Activated CD4-positive, alpha-beta T cell treated with anti-CD3 and anti-CD28 coated beads, Interleukin-2, amount 10 ng/mL, durations not matched to agents 24 days and 14 days (primary cell): ENCODE measurements at regions of chr9 and their contacts with region 1.

Region 1: DNA sequence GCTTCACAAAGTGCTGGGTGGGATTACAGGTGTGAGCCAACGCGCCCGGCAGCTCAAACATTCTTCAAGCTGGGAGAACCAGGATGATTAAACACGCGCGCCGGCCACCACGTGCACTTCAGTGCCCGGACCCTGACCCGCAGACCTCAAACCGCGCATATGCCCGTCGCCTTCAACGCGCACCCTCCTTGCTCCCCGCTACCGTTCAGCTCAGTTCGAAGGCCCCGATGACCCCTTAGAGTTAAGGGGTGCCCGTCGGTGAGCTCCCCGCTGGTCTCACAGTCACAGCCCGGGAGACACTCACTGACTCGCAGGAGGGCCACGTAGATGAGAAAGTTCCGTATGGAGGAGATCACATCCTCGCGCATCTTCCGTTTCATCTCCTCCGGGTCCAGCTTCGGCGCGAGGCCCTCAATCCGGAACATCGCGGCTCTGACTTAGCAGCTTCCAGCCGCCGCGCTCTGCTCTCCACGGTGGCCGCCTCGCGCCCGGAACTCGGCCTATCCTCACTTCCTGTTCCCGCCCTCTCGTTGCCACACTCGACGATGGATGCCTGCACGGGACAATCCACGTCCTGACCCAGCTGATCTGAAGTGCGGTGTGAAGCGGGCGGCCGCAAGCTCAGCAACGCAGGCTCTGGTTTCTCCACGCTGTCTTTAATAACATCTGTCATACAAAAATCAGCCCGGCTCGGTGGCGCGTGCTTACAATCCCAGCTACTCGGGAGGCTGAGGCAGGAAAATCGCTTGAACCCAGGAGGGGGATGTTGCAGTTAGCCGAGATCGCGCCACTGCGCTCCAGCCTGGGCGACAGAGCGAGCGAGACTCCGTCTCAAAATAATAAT is at the start of gene TOMM5:
- DNase-seq: peak; percentile 98
- H3K4me3 Mint-ChIP-seq: peak within 1 kb of the TSS; percentile 97
- H3K27ac Mint-ChIP-seq: peak within 1 kb of the TSS; percentile 99
- H3K4me1 Mint-ChIP-seq: peaks cover 21% of the 10 kb centered on the region
- H3K27me3 Mint-ChIP-seq: peaks cover 16% of the 10 kb centered on the region
- total RNA-seq, gene TOMM5: 186 and 193 TPM in 2 replicates

Region 2: DNA sequence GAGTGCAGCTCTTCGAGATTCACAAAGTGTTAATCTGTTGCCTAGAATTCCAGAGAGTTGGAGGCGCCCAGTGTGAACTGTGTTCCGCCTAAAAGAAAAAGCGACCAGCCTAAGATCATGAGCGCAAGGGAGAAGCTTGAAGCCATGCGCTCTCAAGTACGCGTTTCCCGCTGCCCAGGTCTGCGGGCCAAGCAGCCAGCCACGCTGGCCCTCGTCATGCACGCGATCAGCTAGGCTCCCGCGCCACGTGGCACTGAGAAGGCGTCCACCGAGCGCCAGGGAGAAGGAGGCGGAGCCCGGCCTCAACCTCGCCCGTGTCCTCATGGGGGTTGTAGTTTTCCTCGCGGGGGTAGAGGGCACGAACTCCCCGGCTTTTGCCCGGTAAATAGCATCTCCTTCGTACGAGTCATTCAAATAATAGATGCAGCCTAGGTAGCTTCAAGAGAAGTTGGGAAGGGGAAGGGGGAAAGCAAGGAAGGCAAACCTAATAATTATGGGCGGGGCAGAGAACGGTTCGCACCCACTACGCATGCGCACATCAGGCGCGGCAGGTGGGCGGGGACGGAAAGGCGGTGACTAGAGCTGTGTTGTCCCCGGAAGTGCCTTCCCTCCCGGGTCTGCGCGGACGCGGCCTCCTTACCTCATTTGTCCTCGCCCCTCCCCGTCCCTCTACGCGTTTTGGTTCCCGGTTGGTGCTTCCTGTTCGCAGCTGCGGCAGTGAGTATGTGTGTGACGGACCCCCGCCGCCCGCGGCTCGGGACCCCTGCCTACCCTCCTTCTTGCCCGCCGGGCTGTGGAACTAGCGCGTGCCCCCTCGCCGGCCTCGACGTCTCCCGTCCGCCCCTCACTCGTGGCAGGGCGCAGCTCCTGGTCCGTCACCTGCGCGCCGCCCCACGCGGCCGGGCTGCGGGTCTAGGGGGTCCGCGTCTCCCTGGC is 472.2 kb before region 1 on chr9 and contains the start of gene ZCCHC7:
- intact Hi-C with region 1: loop called (anchors 5 kb)
- DNase-seq: peak; percentile 97
- H3K4me3 Mint-ChIP-seq: peak within 1 kb of the TSS; percentile 92
- H3K27ac Mint-ChIP-seq: peak within 1 kb of the TSS; percentile 98
- H3K4me1 Mint-ChIP-seq: peaks cover 17% of the 10 kb centered on the region
- H3K27me3 Mint-ChIP-seq: no peaks in the 10 kb centered on the region
- total RNA-seq, gene ZCCHC7: 24.2 and 25.3 TPM in 2 replicates

Region 3: DNA sequence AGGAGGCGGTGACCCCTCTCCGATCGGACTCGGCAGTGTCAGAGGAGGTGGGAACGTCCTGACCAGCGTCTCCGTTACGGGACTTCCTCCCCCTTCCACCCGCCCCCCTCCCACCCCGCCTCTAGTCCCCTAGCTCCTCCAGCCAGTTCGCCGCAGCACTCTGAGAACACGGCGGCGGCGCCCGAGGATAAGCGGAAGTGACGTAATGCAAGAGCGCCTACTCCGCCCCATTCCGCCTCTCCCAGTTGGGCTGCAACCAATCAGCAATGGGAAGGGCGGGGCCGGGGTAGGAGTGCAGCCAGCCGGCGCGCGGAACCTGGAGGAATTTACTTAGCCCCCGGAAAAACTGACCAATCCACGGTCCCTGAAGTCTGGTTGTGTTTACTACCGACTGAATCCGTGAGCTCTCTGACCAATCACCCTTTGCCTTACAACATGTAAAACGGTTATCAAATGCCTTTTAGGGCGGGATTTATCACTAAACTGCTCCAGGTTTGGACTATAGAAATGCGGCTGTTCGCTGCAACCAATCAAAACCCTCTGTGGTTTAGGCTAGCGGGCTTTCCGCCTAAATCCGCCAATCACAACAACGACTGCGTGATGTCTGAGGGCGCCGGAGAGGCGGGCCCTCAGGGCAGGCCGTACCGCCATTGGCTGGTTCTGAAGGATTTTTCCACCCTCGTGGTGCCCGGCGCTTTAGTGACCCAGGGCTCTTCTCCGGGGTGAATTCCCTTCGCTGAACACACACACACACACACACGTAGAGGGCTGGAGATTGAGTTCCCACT is 126.9 kb before region 1 on chr9 and contains the start of gene ZBTB5:
- intact Hi-C with region 1: loop called (anchors 1 kb)
- DNase-seq: peak; percentile 99
- H3K4me3 Mint-ChIP-seq: peak within 1 kb of the TSS; percentile 99
- H3K27ac Mint-ChIP-seq: peak within 1 kb of the TSS; percentile 98
- H3K4me1 Mint-ChIP-seq: peaks cover 35% of the 10 kb centered on the region
- H3K27me3 Mint-ChIP-seq: no peaks in the 10 kb centered on the region
- total RNA-seq, gene ZBTB5: 9.2 and 9.5 TPM in 2 replicates

Region 4: DNA sequence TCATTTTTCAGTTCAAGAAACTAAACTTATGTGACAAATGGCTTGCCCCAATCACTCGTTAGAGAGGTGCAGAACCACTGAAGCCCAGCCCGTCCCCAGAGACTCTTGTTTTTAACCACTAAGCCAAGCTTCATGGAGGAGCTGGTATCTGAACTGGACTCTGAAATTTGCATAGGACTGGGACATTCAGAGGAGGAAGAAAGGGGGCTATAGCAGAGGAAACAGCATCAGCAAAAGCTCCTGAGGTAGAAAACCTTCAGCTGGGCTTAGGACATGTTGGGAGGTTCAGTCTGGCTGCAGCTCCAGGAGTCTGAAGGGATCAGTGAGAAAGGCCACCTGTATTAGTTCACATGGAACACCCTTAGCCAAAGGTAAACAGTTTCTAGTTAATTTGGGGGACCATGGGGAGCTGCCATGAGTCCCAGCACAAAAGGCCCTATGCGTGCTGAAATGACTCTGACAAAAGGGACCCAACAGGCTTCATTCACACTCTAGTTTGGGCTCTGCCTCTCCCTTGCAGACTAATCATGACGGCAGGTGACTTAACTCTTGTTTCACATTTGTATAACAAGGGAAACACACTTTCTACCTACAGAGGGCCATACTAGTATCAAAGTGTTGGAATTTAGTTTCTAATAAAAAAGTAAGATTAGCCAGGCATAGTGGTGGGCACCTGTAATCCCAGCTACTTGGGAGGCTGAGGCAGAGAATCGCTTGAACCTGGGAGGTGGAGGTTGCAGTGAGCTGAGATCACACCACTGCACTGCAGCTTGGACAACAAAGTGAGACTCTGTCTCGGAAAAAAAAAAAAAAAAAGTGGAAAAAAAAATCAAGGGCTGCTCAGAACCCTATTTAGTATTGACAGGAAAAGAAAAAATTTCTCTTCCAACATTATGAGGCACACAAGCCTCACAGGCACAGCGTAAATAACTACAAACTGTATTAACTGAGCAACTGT is 26.4 kb before region 1 on chr9:
- intact Hi-C with region 1: no loop called
- DNase-seq: no peak
- H3K4me3 Mint-ChIP-seq: no peak overlapping the region
- H3K27ac Mint-ChIP-seq: no peak overlapping the region
- H3K4me1 Mint-ChIP-seq: peaks cover 2% of the 10 kb centered on the region
- H3K27me3 Mint-ChIP-seq: no peaks in the 10 kb centered on the region

Region 5: GRCh38 chr9:37575921-37576721 is 16.2 kb before region 1 on chr9 and contains the start of gene FBXO10:
- intact Hi-C with region 1: loop called (anchors 2 kb)
- DNase-seq: peak; percentile 88
- H3K4me3 Mint-ChIP-seq: peak within 1 kb of the TSS; percentile 90
- H3K27ac Mint-ChIP-seq: peak within 1 kb of the TSS; percentile 31
- H3K4me1 Mint-ChIP-seq: peaks cover 22% of the 10 kb centered on the region
- H3K27me3 Mint-ChIP-seq: peaks cover 10% of the 10 kb centered on the region
- total RNA-seq, gene FBXO10: 1.9 and 2.7 TPM in 2 replicates

Region 6: GRCh38 chr9:37632479-37632878 is 40.1 kb after region 1 on chr9:
- intact Hi-C with region 1: no loop called
- DNase-seq: no peak
- H3K4me3 Mint-ChIP-seq: no peak overlapping the region
- H3K27ac Mint-ChIP-seq: no peak overlapping the region
- H3K4me1 Mint-ChIP-seq: no peaks in the 10 kb centered on the region
- H3K27me3 Mint-ChIP-seq: peaks cover 5% of the 10 kb centered on the region

Region 7: GRCh38 chr9:37753489-37754190 is 161.3 kb after region 1 on chr9 and contains the start of gene TRMT10B:
- intact Hi-C with region 1: loop called (anchors 1 kb)
- DNase-seq: peak; percentile 92
- H3K4me3 Mint-ChIP-seq: peak within 1 kb of the TSS; percentile 99
- H3K27ac Mint-ChIP-seq: peak within 1 kb of the TSS; percentile 97
- H3K4me1 Mint-ChIP-seq: peaks cover 22% of the 10 kb centered on the region
- H3K27me3 Mint-ChIP-seq: no peaks in the 10 kb centered on the region
- total RNA-seq, gene TRMT10B: 12.4 and 13.2 TPM in 2 replicates

Region 8: DNA sequence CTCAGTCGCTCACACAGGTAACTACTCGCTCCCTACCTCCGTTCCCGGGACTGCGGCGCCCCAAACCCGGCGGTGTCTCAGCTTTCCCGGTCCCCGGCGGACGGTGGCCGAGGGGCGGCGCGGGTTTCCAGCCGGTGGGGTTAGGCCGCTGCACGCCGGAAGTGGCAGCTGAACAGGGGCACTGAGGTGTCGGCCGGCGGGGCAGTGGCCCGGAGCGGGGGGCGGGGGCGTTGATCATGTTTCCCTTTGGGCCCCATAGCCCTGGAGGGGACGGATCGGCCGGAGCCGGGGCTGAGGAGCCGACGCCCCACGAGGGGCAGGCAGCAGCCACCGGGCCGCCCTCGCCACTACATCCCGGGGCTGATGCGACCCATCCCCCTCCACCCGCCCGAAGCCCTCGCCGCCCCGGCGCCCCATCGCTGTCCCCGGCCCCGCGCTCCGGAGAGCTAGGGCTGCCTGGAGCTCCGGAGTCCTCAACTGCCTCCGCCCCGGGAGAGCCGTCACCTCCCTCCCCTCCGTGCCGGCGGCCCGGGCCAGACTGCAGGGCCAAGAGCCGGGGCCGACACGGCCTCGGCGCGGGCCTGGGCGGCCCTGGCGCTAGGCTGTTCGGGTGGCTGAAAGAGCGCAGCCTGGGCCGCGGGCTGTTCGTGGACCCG is 208.4 kb after region 1 on chr9 and contains the start of gene DCAF10:
- intact Hi-C with region 1: loop called (anchors 5 kb)
- DNase-seq: peak; percentile 98
- H3K4me3 Mint-ChIP-seq: peak within 1 kb of the TSS; percentile 94
- H3K27ac Mint-ChIP-seq: peak within 1 kb of the TSS; percentile 88
- H3K4me1 Mint-ChIP-seq: peaks cover 29% of the 10 kb centered on the region
- H3K27me3 Mint-ChIP-seq: no peaks in the 10 kb centered on the region
- total RNA-seq, gene DCAF10: 14.5 and 17.8 TPM in 2 replicates